Activated naive CD4-positive, alpha-beta T cell treated with anti-CD3 and anti-CD28 coated beads for 36 hours (primary cell): ENCODE measurements at regions of chr12 and their contacts with region 1.

Region 1: DNA sequence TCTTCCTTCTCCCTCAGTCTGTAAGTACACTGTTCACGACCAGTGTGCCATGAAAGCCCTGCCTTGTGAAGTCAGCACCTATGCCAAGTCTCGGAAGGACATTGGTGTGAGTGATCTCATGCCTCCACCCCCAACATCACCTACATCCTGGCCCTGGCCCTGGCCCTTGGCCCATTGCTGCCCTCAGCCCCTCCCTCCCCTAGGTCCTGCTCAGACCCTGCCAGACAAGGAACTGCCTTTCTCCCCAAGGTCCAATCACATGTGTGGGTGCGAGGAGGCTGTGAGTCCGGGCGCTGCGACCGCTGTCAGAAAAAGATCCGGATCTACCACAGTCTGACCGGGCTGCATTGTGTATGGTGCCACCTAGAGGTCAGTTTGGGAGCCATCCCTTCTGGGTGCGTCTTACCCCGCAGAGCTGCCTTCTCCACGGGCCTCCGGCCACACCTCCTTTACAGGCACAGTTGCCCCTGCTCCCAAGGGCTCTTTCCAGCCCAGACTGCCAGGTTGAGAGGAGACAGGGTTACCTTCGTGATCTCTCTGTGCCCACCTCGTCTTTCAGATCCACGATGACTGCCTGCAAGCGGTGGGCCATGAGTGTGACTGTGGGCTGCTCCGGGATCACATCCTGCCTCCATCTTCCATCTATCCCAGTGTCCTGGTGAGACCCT is 9.2 kb downstream of the DGKA start:
- DNase-seq: peak; percentile 94
- H3K4me3 Mint-ChIP-seq: no peak overlapping the region
- H3K27ac Mint-ChIP-seq: peak overlapping the region; percentile 74
- H3K4me1 Mint-ChIP-seq: peaks cover 72% of the 10 kb centered on the region
- H3K27me3 Mint-ChIP-seq: no peaks in the 10 kb centered on the region

Region 2: GRCh38 chr12:55823419-55823818 is 116.8 kb before region 1 on chr12:
- CTCF ChIA-PET with region 1: interaction called, 17 read pairs
- intact Hi-C with region 1: no loop called
- DNase-seq: no peak
- H3K4me3 Mint-ChIP-seq: no peak overlapping the region
- H3K27ac Mint-ChIP-seq: peak overlapping the region; percentile 90
- H3K4me1 Mint-ChIP-seq: peaks cover 57% of the 10 kb centered on the region
- H3K27me3 Mint-ChIP-seq: no peaks in the 10 kb centered on the region

Region 3: GRCh38 chr12:55829967-55830600 is 110.1 kb before region 1 on chr12:
- CTCF ChIA-PET with region 1: interaction called, 17 read pairs
- intact Hi-C with region 1: no loop called
- DNase-seq: peak; percentile 24
- H3K4me3 Mint-ChIP-seq: peak overlapping the region; percentile 96
- H3K27ac Mint-ChIP-seq: peak overlapping the region; percentile 87
- H3K4me1 Mint-ChIP-seq: peaks cover 52% of the 10 kb centered on the region
- H3K27me3 Mint-ChIP-seq: no peaks in the 10 kb centered on the region

Region 4: DNA sequence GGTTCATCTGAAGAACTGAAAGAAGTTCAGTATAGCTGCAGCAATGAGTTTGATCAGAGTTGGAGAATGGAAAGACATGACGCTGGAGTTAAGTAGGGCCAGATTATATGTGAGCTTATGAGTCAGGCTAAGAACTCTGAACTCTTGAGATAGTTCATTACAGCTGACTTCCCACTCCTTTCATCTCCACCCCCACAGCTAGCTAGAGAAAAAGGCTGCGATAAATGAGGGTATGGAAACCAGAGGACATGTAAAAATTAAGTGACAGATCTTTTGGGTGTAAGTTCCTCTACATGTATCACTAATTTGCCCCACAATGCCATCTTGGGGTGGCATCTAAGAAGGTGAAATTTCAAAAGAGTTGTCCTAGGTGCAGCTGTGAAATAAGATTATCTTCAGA is 41.1 kb before region 1 on chr12:
- CTCF ChIA-PET with region 1: no interaction called
- intact Hi-C with region 1: loop called (anchors 1 kb)
- DNase-seq: peak; percentile 71
- H3K4me3 Mint-ChIP-seq: no peak overlapping the region
- H3K27ac Mint-ChIP-seq: peak overlapping the region; percentile 70
- H3K4me1 Mint-ChIP-seq: peaks cover 13% of the 10 kb centered on the region
- H3K27me3 Mint-ChIP-seq: no peaks in the 10 kb centered on the region